ENCODE measurements at regions of chr3 and their contacts with region 1.

Region 1: DNA sequence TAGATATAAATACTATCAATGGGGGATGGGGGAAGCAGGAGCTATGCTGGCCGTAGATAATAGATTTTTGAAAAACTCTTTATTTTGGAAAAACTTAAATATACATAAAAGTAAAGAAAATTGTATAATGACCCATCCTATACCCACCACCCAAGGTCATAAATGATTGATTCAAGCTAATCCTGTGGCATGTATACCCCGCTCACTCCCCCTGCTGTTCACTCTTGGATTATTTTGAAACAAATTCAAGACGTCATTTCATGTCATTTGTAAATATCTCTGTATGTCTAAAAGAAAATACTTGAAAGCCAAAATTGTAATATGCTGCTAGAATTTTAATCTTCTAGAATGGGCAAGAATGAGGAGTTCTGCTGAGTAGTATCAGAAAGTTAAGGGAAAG is 241.8 kb downstream of the FEZF2 start:
- DNase-seq: no peak
- H3K4me3 ChIP-seq: no peak overlapping the region
- CTCF ChIP-seq: peak; percentile 13

Region 2: GRCh38 chr3:61858056-61858455 is 273.5 kb before region 1 on chr3:
- CTCF ChIA-PET with region 1: interaction called, 15 read pairs
- POLR2A ChIA-PET with region 1: no interaction called
- DNase-seq: no peak
- H3K4me3 ChIP-seq: no peak overlapping the region
- CTCF ChIP-seq: peak; percentile 31

Region 3: DNA sequence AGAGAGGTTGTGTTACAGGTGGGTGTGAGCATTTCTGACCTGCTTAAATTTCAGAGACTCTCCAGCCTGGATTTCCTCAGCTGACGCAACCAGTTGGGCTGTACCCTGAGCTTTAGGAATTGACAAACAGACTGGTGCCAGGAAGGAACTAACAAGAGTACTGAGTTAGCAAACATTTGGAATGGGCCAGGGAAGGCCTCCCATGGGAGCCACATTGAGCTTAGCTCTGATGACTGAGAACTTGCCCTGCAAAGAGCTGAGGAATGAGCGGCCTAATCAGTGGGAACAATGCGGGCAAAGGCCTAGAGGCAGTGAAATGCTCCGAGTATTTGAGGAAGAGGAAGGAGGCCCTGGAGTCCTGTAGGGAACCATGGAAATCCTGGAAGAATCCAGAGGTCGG is 12.4 kb before region 1 on chr3:
- CTCF ChIA-PET with region 1: interaction called, 24 read pairs
- POLR2A ChIA-PET with region 1: no interaction called
- DNase-seq: no peak
- H3K4me3 ChIP-seq: no peak overlapping the region
- CTCF ChIP-seq: no peak

Measured in AG04449 (cell line).